Activated CD4-positive, alpha-beta T cell treated with anti-CD3 and anti-CD28 coated beads, Interleukin-2, amount 10 ng/mL, durations not matched to agents 24 days and 14 days (primary cell): ENCODE measurements at regions of chr7 and their contacts with region 1.

Region 1: DNA sequence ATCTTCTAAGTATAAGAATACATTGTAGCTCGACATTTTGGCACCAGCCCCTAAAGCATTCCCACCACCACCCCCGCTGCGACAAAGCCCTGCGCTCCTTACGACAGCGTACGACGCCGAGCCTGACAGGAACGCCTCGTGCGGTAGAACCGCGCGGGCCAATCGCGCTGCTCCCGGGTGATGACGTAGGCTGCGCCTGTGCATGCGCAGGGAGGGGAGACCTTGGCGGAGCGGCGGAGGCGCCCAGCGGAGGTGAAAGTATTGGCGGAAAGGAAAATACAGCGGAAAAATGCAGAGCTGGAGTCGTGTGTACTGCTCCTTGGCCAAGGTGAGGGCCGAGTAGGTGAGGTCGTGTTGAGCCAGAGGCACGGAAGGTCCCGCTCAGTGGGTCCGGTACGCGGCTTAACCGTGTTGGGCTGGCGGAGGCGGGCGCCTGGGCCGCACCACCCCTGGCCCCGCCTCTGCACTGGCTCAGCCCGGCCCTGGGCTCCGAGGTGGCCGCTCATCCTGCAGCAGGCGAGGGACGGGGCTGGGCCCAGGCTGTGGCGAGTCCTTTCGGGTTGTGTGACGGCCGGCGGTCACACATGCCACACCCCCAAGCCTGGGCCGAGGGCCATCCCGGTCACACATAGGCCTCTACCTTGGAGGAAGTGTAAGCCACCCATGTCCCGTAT is at the start of gene DLD:
- DNase-seq: peak; percentile 99
- H3K4me3 Mint-ChIP-seq: peak within 1 kb of the TSS; percentile 100
- H3K27ac Mint-ChIP-seq: peak within 1 kb of the TSS; percentile 99
- H3K4me1 Mint-ChIP-seq: peaks cover 41% of the 10 kb centered on the region
- H3K27me3 Mint-ChIP-seq: peaks cover 2% of the 10 kb centered on the region
- total RNA-seq, gene DLD: 113 and 119 TPM in 2 replicates

Region 2: DNA sequence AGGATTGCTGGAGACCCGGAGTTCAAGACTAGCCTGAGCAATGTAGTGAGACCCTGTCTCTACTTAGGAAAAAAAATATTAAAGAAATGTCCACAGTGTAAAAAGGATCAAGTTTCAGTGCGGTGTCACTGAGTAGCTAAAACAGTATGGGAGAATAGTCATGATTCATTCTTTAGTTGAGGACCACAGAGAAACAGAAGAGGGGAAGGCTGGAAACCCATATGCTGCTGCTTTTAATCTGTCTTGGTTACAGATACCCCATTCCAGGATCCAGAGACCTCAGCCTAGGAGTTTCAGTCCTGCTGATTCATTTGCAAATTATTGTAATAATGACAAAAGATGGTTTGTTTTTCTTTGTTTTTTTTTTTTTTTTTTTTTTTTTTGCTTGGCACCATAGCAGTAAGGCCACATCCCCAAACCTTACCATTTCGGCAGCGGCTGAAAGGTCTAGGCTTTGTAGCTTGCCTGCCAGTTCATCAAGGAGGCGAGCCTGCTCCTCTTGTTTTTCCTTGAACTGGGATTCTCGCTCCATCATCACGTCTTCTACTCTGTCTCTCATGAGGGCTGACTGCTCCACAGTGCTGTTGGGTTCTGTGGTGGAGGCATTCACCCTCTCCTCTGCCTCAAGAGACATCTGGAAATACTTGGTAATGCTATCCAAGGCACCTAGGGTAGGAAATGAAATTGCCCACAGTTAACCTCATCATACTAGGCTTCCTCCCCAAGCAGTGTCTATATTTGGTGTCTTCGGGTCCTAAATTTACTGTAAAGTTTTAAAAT is 44.1 kb after region 1 on chr7:
- intact Hi-C with region 1: no loop called
- DNase-seq: no peak
- H3K4me3 Mint-ChIP-seq: no peak overlapping the region
- H3K27ac Mint-ChIP-seq: no peak overlapping the region
- H3K4me1 Mint-ChIP-seq: peaks cover 7% of the 10 kb centered on the region
- H3K27me3 Mint-ChIP-seq: no peaks in the 10 kb centered on the region

Region 3: DNA sequence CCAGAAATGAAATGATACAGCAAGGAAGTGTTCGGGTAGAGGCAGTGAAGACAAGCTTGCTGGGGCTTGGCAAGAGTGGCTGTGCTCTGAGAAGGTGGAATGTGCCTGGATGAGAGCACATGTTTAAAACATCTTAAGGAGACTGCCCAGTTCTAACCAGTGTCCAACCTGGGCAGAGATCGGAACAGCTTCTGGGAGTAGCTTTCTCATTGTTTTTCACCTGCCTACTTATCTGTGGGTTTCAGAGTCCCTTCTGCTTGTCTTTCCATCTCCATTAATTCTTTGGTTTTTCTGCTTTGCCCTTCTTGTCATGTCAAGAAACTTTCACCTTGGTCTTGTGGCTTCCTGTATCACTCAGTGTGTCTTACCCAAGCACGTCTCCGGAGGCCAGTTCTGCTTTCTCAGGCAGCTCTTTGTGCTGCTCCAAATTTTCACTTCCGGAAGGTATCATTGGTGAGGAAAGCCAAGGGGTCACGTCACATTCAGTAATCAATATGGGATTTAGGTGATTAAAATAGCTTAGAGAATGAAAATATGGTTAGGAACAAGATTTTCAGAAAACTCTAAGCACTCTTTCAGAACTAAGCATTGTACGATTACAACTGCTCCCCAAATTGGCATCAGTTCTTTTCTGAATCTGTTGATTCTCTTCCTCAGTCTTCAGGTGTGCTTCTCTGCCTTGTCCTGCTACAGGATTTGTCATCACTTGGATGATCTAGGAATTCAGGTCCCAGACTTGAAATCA is 244.5 kb after region 1 on chr7:
- intact Hi-C with region 1: loop called (anchors 5 kb)
- DNase-seq: peak; percentile 82
- H3K4me3 Mint-ChIP-seq: peak overlapping the region; percentile 66
- H3K27ac Mint-ChIP-seq: peak overlapping the region; percentile 93
- H3K4me1 Mint-ChIP-seq: peaks cover 25% of the 10 kb centered on the region
- H3K27me3 Mint-ChIP-seq: peaks cover 14% of the 10 kb centered on the region